Pancreas (tissue), 10 donors: ENCODE measurements at regions of chr15 and their contacts with region 1.

Region 1: GRCh38 chr15:58070801-58071418 is 5.4 kb upstream of the ALDH1A2 start:
- DNase-seq: peak; percentile 11 to 81 (median 51)
- ATAC-seq: peak in 3 of 4 donors; percentile 55 to 73 (median 66)
- H3K4me3 ChIP-seq: no peak overlapping the region
- H3K27ac ChIP-seq: no peak overlapping the region
- H3K4me1 ChIP-seq: peaks cover 0 to 2% (median 0%) of the 10 kb centered on the region in 3 donors
- H3K27me3 ChIP-seq: peaks cover 0 to under 1% (median 0%) of the 10 kb centered on the region in 4 donors
- CTCF ChIP-seq: peak; percentile 76 to 89 (median 80)

Region 2: DNA sequence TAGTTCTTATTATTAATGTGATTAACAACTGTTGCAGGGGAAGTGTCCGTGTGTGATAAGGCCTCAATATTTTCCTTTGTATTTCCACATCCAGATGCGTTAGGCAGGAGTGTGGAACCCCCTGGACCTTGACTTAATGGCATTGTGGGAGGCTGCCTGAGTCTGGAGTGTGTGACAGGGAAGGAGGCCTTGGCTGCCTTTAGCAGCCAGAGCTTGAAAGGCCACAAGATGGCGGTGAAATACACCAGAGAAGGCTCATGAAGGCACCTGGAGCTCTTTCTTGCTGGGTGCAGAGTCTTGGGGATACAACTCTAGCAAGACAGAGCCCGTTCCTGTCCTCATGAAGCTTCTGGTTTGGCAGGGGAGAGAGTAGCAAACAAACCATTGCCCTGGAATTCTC is 327.5 kb before region 1 on chr15:
- intact Hi-C with region 1: loop called in 1 of 3 experiments (anchors 10 kb)
- DNase-seq: no peak
- ATAC-seq: no peak
- H3K4me3 ChIP-seq: no peak overlapping the region
- H3K27ac ChIP-seq: no peak overlapping the region
- H3K4me1 ChIP-seq: no peaks in the 10 kb centered on the region
- H3K27me3 ChIP-seq: no peaks in the 10 kb centered on the region
- CTCF ChIP-seq: no peak

Region 3: GRCh38 chr15:57866149-57866736 is 204.7 kb before region 1 on chr15:
- intact Hi-C with region 1: loop called (anchors 5 to 10 kb)
- DNase-seq: peak; percentile 31 to 87 (median 60)
- ATAC-seq: peak; percentile 77 to 92 (median 87)
- H3K4me3 ChIP-seq: no peak overlapping the region
- H3K27ac ChIP-seq: no peak overlapping the region
- H3K4me1 ChIP-seq: no peaks in the 10 kb centered on the region
- H3K27me3 ChIP-seq: no peaks in the 10 kb centered on the region
- CTCF ChIP-seq: peak; percentile 30 to 63 (median 58)

Region 4: GRCh38 chr15:58182460-58183163 is 111.7 kb after region 1 on chr15:
- intact Hi-C with region 1: loop called in 1 of 3 experiments (anchors 10 kb)
- DNase-seq: peak; percentile 6 to 61 (median 28)
- ATAC-seq: peak in 3 of 4 donors; percentile 90 to 91 (median 90)
- H3K4me3 ChIP-seq: no peak overlapping the region
- H3K27ac ChIP-seq: no peak overlapping the region
- H3K4me1 ChIP-seq: no peaks in the 10 kb centered on the region
- H3K27me3 ChIP-seq: no peaks in the 10 kb centered on the region
- CTCF ChIP-seq: peak in 3 of 4 donors; percentile 58 to 69 (median 59)

Region 5: GRCh38 chr15:58292751-58293175 is 221.9 kb after region 1 on chr15:
- intact Hi-C with region 1: no loop called
- DNase-seq: no peak
- ATAC-seq: no peak
- H3K4me3 ChIP-seq: no peak overlapping the region
- H3K27ac ChIP-seq: no peak overlapping the region
- H3K4me1 ChIP-seq: no peaks in the 10 kb centered on the region
- H3K27me3 ChIP-seq: no peaks in the 10 kb centered on the region
- CTCF ChIP-seq: no peak